Activated CD4-positive, alpha-beta T cell treated with anti-CD3 and anti-CD28 coated beads for 36 hours (primary cell): ENCODE measurements at regions of chr19 and their contacts with region 1.

Region 1: DNA sequence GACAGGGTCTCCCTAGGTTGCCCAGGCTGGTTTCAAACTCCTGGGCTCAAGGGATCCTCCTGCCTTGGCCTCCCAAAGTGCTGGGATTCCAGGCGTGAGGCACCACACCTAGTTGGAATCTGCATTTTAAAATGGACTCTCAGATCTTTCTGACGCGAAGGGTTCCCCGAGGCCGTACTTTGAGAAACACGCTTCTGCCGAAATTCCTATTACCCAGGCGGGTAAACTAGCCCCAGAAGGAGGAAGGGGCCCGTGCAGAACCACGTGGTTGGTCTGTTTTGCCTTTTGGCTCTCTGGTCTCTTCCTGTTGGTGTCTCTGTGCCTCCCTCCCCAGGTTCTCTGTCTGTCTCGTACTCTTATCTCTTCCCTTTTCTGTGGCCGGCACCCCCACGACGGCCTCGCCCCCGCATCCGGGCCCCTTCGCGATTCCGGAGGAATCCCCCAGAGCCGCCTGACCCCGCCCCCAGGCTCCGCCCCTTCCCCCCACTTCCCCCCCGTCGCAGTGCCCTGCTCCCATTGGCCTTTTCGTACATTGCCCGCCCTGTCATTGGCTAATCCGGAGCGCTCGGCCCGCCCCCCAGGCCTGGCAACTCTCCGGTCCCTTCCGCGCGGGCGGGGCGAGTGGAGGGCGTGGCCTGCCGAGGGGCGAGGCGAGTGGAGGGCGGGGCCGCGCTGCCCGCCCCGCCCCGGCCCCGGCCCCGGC is at the start of gene TNFAIP8L1:
- DNase-seq: peak; percentile 100
- ATAC-seq: peak; percentile 95
- H3K4me3 Mint-ChIP-seq: peak within 1 kb of the TSS; percentile 90
- H3K27ac Mint-ChIP-seq: peak within 1 kb of the TSS; percentile 97
- H3K4me1 Mint-ChIP-seq: peaks cover 26% of the 10 kb centered on the region
- H3K27me3 Mint-ChIP-seq: no peaks in the 10 kb centered on the region
- total RNA-seq, gene TNFAIP8L1: 14.1 to 15.4 TPM

Region 2: GRCh38 chr19:4246767-4247593 is 392.0 kb before region 1 on chr19 and contains the start of gene YJU2:
- CTCF ChIA-PET with region 1: no interaction called
- POLR2A ChIA-PET with region 1: no interaction called
- intact Hi-C with region 1: loop called in 1 of 2 experiments (anchors 1 kb)
- DNase-seq: peak; percentile 100
- ATAC-seq: peak; percentile 97
- H3K4me3 Mint-ChIP-seq: peak within 1 kb of the TSS; percentile 84
- H3K27ac Mint-ChIP-seq: peak within 1 kb of the TSS; percentile 100
- H3K4me1 Mint-ChIP-seq: peaks cover 9% of the 10 kb centered on the region
- H3K27me3 Mint-ChIP-seq: no peaks in the 10 kb centered on the region
- total RNA-seq, gene YJU2: 29.8 to 34.8 TPM

Region 3: GRCh38 chr19:4350726-4351125 is 288.3 kb before region 1 on chr19:
- CTCF ChIA-PET with region 1: no interaction called
- POLR2A ChIA-PET with region 1: no interaction called
- intact Hi-C with region 1: no loop called
- DNase-seq: no peak
- ATAC-seq: no peak
- H3K4me3 Mint-ChIP-seq: no peak overlapping the region
- H3K27ac Mint-ChIP-seq: no peak overlapping the region
- H3K4me1 Mint-ChIP-seq: peaks cover 2% of the 10 kb centered on the region
- H3K27me3 Mint-ChIP-seq: no peaks in the 10 kb centered on the region

Region 4: DNA sequence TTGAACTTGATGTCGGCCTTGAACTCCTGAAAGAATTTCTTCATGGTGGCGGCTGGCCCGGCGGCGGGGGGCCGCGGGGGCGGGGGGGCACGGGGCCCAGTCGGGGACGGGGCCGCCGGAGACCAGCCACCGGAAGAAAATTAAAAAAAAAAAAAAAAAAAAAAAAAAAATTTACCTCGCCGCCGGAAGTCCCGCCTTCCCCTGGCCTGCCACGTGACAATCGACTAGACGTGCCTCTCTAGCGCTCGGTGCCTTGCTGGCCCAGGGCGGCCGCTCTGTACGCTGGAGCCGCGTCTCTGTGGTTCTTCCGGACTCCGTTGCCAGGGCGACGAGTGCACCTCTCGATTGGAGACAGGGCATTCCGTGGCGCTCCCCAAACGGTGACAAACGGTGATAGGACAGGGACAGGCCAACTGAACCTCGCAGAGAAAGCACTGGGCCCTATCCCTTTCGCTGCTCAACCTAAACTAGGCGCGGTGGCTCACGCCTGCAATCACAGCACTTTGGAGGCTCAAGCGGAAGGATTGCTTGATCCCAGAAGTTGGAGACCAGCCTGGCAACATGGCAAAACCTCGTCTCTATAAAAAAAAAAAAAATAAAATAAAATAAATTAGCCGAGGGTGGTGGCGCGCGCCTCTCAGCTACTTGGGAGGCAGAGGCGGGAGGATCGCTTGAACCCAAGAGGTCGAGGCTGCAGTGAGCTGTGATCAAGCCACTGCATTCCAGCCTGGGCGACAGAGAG is 181.2 kb before region 1 on chr19 and contains the start of gene UBXN6:
- CTCF ChIA-PET with region 1: no interaction called
- POLR2A ChIA-PET with region 1: no interaction called
- intact Hi-C with region 1: loop called in 1 of 2 experiments (anchors 5 kb)
- DNase-seq: peak; percentile 99
- ATAC-seq: peak; percentile 93
- H3K4me3 Mint-ChIP-seq: peak within 1 kb of the TSS; percentile 86
- H3K27ac Mint-ChIP-seq: peak within 1 kb of the TSS; percentile 86
- H3K4me1 Mint-ChIP-seq: peaks cover 19% of the 10 kb centered on the region
- H3K27me3 Mint-ChIP-seq: no peaks in the 10 kb centered on the region
- total RNA-seq, gene UBXN6: 32.9 to 38.4 TPM

Region 5: DNA sequence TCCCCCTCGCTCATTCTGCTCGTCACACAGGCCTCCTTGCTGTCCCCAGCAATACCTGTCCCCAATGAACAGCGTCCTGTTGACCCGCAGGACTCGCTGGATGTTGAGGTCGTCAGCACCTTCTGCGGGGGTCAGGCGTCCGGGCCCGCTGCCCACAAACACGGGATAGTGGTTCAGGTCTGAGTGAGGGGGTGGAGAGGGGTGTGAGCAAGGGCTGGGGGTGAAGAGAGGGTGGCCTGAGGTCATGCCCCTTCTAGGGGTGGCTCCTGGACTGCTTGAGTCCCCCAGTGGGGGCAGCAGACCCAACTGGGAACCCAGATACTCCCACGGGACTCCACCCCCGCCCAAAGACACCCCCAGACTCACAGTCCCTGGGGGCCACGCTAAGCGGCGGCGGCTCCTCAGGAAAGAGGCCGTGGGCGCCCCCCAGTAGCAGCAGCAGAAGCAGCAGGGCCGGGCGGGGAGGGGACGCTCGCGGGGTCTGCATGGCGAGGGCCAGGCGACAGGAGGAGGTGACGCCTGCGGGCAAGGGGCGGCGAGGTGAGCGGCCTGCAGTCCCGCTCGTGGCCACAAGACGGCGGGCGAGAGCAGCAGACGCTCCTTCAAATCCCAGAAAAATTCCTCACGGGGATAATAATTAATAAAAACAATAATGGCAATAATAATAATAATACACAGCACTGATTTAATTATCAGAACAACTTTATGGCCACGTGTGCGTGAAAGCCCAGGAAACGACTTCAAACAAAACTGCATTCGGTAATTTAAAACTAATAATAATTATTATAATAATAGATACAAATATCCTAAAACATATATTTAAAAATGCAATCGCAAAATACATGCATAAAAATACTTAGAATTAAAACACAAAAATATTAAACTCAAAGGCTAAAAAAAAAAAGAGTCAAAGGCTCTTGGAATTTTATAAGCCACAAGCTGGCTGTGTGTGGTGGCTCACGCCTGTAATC is 80.7 kb before region 1 on chr19:
- CTCF ChIA-PET with region 1: interaction called, 4 read pairs
- POLR2A ChIA-PET with region 1: no interaction called
- intact Hi-C with region 1: loop called in 1 of 2 experiments (anchors 1 kb)
- DNase-seq: peak; percentile 66
- ATAC-seq: no peak
- H3K4me3 Mint-ChIP-seq: no peak overlapping the region
- H3K27ac Mint-ChIP-seq: no peak overlapping the region
- H3K4me1 Mint-ChIP-seq: no peaks in the 10 kb centered on the region
- H3K27me3 Mint-ChIP-seq: no peaks in the 10 kb centered on the region

Region 6: GRCh38 chr19:4669723-4670480 is 30.9 kb after region 1 on chr19 and contains the start of gene MYDGF:
- CTCF ChIA-PET with region 1: interaction called, 7 read pairs
- POLR2A ChIA-PET with region 1: no interaction called
- intact Hi-C with region 1: loop called in 1 of 2 experiments (anchors 1 kb)
- DNase-seq: peak; percentile 97
- ATAC-seq: peak; percentile 99
- H3K4me3 Mint-ChIP-seq: peak within 1 kb of the TSS; percentile 85
- H3K27ac Mint-ChIP-seq: peak within 1 kb of the TSS; percentile 75
- H3K4me1 Mint-ChIP-seq: peaks cover 18% of the 10 kb centered on the region
- H3K27me3 Mint-ChIP-seq: no peaks in the 10 kb centered on the region
- total RNA-seq, gene MYDGF: 34.7 to 53.8 TPM

Region 7: GRCh38 chr19:4768934-4769777 is 130.2 kb after region 1 on chr19:
- CTCF ChIA-PET with region 1: no interaction called
- POLR2A ChIA-PET with region 1: no interaction called
- intact Hi-C with region 1: no loop called
- DNase-seq: peak; percentile 92
- ATAC-seq: peak; percentile 85
- H3K4me3 Mint-ChIP-seq: no peak overlapping the region
- H3K27ac Mint-ChIP-seq: no peak overlapping the region
- H3K4me1 Mint-ChIP-seq: no peaks in the 10 kb centered on the region
- H3K27me3 Mint-ChIP-seq: peaks cover 11% of the 10 kb centered on the region

Region 8: GRCh38 chr19:4909897-4910593 is 271.1 kb after region 1 on chr19:
- CTCF ChIA-PET with region 1: no interaction called
- POLR2A ChIA-PET with region 1: no interaction called
- intact Hi-C with region 1: loop called in 1 of 2 experiments (anchors 5 kb)
- DNase-seq: peak; percentile 98
- ATAC-seq: peak; percentile 78
- H3K4me3 Mint-ChIP-seq: peak overlapping the region; percentile 83
- H3K27ac Mint-ChIP-seq: peak overlapping the region; percentile 90
- H3K4me1 Mint-ChIP-seq: peaks cover 42% of the 10 kb centered on the region
- H3K27me3 Mint-ChIP-seq: no peaks in the 10 kb centered on the region